ENCODE measurements at regions of chr3 and their contacts with region 1.

Region 1: GRCh38 chr3:172332256-172333041 is 115.8 kb downstream of the GHSR start:
- DNase-seq: peak; percentile 64
- H3K4me3 Mint-ChIP-seq: no peak overlapping the region
- H3K27ac Mint-ChIP-seq: no peak overlapping the region
- H3K4me1 Mint-ChIP-seq: peaks cover 8% of the 10 kb centered on the region
- H3K27me3 Mint-ChIP-seq: no peaks in the 10 kb centered on the region

Region 2: DNA sequence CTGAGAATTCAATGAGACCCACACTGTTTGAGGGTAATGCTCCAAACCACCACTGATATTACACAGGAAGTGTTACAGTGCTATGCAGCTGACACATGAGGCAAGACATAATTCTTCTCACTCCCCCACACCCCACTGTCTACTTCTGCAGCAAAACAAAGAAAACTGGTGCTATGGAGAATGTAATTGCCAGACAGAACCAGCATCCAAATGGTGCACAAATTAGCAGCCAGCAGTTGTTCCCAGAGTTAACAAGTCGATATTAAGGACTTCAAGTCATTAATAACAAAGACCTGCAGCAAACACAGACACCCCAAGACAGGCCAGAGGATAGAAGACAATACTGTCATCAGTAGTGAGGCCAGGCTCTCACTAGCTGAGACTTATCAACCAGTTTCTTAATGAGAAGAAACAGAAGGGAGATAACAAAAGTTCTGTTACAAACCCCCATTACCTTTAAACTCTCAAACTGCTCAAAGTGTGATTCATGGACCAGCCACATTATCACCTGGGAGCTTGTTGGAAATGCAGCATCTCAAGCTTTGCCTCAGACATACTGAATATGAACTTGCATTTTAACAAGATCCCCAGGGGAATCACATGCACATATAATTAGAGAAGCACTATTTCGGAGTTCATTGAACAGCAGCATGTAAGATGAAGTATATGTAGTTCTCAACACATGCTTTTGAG is 351.7 kb before region 1 on chr3:
- CTCF ChIA-PET with region 1: interaction called, 11 read pairs
- POLR2A ChIA-PET with region 1: no interaction called
- intact Hi-C with region 1: no loop called
- DNase-seq: no peak
- H3K4me3 Mint-ChIP-seq: no peak overlapping the region
- H3K27ac Mint-ChIP-seq: no peak overlapping the region
- H3K4me1 Mint-ChIP-seq: peaks cover 5% of the 10 kb centered on the region
- H3K27me3 Mint-ChIP-seq: no peaks in the 10 kb centered on the region

Region 3: GRCh38 chr3:172039436-172040077 is 292.9 kb before region 1 on chr3 and contains the start of gene FNDC3B:
- CTCF ChIA-PET with region 1: interaction called, 28 read pairs
- POLR2A ChIA-PET with region 1: no interaction called
- intact Hi-C with region 1: no loop called
- DNase-seq: peak; percentile 96
- H3K4me3 Mint-ChIP-seq: peak within 1 kb of the TSS; percentile 88
- H3K27ac Mint-ChIP-seq: peak within 1 kb of the TSS; percentile 89
- H3K4me1 Mint-ChIP-seq: peaks cover 29% of the 10 kb centered on the region
- H3K27me3 Mint-ChIP-seq: no peaks in the 10 kb centered on the region
- total RNA-seq, gene FNDC3B: 14.4 to 17.8 TPM

Region 4: GRCh38 chr3:172315401-172316091 is 16.9 kb before region 1 on chr3:
- CTCF ChIA-PET with region 1: interaction called, 27 read pairs
- POLR2A ChIA-PET with region 1: no interaction called
- intact Hi-C with region 1: no loop called
- DNase-seq: peak; percentile 33
- H3K4me3 Mint-ChIP-seq: no peak overlapping the region
- H3K27ac Mint-ChIP-seq: peak overlapping the region; percentile 34
- H3K4me1 Mint-ChIP-seq: peaks cover 17% of the 10 kb centered on the region
- H3K27me3 Mint-ChIP-seq: no peaks in the 10 kb centered on the region

Region 5: DNA sequence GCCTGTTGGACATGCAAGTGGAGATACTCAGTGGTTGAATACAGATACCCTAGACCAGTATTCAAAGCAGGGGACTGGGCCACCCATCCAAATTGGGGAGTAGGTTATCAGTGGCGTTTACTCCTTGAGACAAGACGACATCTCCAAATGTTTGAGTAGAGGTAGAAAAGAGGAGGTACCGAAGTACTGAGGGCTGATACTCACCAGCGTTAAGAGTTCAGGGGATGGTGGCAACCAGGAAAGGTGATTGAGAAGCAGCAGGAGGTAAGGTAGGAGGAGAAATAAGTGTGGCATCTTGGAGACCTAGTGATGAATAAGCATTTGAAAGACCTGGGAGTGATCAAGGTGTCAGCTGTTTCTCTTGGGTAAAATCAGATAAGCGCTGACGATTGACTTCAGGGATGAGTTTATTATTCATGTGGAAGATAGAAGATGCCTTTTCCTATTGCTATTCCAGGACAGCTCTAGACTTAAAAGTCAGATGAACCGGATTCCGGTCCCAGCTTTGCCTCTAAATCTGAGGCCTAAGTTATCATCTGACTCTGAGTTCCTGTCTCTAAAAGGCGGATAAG is 19.5 kb after region 1 on chr3:
- CTCF ChIA-PET with region 1: interaction called, 10 read pairs
- POLR2A ChIA-PET with region 1: no interaction called
- intact Hi-C with region 1: no loop called
- DNase-seq: no peak
- H3K4me3 Mint-ChIP-seq: no peak overlapping the region
- H3K27ac Mint-ChIP-seq: no peak overlapping the region
- H3K4me1 Mint-ChIP-seq: no peaks in the 10 kb centered on the region
- H3K27me3 Mint-ChIP-seq: no peaks in the 10 kb centered on the region

Region 6: DNA sequence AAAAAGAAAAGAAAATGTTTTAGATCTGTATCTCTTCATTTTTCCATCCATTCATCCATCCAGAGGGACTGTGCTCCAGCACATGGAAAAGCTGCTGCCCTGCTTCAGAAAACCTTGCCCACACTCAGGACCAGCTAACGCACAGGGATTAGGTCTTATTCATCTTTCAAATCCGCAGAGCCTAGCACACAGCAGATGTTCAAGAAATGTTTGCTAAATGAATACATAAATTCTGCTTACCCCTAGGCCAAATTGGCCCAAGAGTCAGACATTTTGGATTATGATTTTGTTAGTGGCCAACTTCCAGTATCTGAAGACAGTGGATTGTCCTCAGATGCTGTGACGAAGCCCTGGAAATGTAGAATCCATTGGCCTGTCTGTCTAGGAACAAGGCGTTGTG is 44.4 kb after region 1 on chr3:
- CTCF ChIA-PET with region 1: no interaction called
- POLR2A ChIA-PET with region 1: no interaction called
- intact Hi-C with region 1: no loop called
- DNase-seq: no peak
- H3K4me3 Mint-ChIP-seq: no peak overlapping the region
- H3K27ac Mint-ChIP-seq: no peak overlapping the region
- H3K4me1 Mint-ChIP-seq: no peaks in the 10 kb centered on the region
- H3K27me3 Mint-ChIP-seq: no peaks in the 10 kb centered on the region

Region 7: GRCh38 chr3:172391592-172392302 is 59.3 kb after region 1 on chr3:
- CTCF ChIA-PET with region 1: no interaction called
- POLR2A ChIA-PET with region 1: no interaction called
- intact Hi-C with region 1: no loop called
- DNase-seq: no peak
- H3K4me3 Mint-ChIP-seq: no peak overlapping the region
- H3K27ac Mint-ChIP-seq: no peak overlapping the region
- H3K4me1 Mint-ChIP-seq: no peaks in the 10 kb centered on the region
- H3K27me3 Mint-ChIP-seq: no peaks in the 10 kb centered on the region

Region 8: DNA sequence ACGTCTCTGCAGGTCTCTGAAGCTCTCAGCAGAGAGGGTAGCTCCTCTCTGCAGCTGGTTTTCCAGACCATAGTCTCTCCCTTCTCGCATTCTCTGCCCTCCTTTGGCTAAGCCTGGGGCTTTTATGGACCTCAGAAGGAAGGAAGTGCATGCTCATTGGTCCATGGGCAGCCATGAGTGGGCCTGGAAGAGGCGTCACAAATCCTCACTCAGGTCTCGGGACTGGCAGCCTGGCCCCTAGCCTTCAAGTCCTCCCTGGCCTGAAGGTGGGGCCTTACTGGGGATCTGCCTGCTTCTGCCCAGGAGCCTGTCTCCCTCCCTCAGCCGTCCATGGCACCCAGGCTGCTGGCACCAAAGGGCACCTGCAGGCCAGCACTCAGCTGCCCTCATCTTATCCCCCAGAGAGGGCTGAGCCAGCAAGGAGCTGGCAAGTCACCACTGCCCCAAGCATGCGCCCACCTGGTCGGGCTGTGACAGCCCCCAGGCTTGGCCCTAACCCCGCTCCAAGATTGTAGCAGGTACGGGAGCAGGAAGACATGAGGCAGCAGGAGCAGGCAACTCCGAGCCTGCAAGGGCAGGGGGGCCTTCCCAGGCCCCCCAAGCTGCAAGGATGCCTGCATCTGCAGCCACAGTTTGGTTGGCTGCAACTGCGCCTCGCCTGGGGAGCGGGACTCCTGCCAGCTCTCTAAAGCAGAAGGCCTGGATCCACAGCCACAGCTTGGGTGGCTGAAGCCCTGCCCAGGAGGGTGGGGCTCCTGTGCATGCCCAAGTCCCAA is 78.4 kb after region 1 on chr3:
- CTCF ChIA-PET with region 1: no interaction called
- POLR2A ChIA-PET with region 1: no interaction called
- intact Hi-C with region 1: no loop called
- DNase-seq: no peak
- H3K4me3 Mint-ChIP-seq: no peak overlapping the region
- H3K27ac Mint-ChIP-seq: no peak overlapping the region
- H3K4me1 Mint-ChIP-seq: no peaks in the 10 kb centered on the region
- H3K27me3 Mint-ChIP-seq: peaks cover 10% of the 10 kb centered on the region

Region 9: DNA sequence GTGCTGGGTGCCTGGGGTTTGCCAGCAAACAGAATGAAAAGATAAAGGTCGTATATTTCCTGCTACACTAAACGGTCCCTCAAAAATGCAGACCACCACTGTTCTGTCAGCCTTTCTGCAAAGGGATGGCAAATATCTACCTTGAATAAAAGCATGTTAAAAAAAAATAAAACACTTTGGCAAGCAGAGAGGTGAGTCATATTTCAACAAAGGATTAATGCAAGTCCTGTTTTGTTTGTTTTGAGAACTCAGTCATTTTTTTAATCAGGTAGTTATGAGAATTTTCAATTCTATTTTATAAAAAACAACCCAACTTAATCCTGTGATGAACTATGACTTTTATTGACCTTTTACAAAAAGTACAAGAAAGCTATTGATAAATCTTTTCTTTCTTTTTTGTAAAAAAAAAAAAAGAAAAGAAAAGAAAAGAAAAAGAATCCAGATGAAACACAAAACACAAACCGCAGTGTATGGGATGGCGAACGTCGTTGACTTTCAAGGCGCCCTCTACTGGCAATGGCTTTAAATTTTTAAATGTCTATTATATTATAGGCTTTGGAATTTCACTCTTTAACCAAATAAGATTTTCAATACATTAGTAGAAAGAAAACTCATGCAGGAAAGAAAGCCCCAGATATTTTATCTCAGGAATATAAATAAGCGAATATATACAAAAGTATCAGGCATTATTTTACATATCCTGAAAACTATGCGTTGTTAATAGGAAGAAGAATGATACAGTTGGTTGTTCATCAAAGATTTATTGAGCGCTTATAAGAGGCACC is 290.7 kb after region 1 on chr3:
- CTCF ChIA-PET with region 1: interaction called, 10 read pairs
- POLR2A ChIA-PET with region 1: no interaction called
- intact Hi-C with region 1: no loop called
- DNase-seq: peak; percentile 44
- H3K4me3 Mint-ChIP-seq: no peak overlapping the region
- H3K27ac Mint-ChIP-seq: no peak overlapping the region
- H3K4me1 Mint-ChIP-seq: peaks cover 9% of the 10 kb centered on the region
- H3K27me3 Mint-ChIP-seq: no peaks in the 10 kb centered on the region

Region 10: GRCh38 chr3:172673210-172673679 is 340.8 kb after region 1 on chr3:
- CTCF ChIA-PET with region 1: interaction called, 17 read pairs
- POLR2A ChIA-PET with region 1: no interaction called
- intact Hi-C with region 1: no loop called
- DNase-seq: peak; percentile 83
- H3K4me3 Mint-ChIP-seq: no peak overlapping the region
- H3K27ac Mint-ChIP-seq: no peak overlapping the region
- H3K4me1 Mint-ChIP-seq: peaks cover 2% of the 10 kb centered on the region
- H3K27me3 Mint-ChIP-seq: no peaks in the 10 kb centered on the region

Measured in activated CD4-positive, alpha-beta memory T cell treated with anti-CD3 and anti-CD28 coated beads for 36 hours (primary cell).